ENCODE measurements at regions of chr13 and their contacts with region 1.

Region 1: DNA sequence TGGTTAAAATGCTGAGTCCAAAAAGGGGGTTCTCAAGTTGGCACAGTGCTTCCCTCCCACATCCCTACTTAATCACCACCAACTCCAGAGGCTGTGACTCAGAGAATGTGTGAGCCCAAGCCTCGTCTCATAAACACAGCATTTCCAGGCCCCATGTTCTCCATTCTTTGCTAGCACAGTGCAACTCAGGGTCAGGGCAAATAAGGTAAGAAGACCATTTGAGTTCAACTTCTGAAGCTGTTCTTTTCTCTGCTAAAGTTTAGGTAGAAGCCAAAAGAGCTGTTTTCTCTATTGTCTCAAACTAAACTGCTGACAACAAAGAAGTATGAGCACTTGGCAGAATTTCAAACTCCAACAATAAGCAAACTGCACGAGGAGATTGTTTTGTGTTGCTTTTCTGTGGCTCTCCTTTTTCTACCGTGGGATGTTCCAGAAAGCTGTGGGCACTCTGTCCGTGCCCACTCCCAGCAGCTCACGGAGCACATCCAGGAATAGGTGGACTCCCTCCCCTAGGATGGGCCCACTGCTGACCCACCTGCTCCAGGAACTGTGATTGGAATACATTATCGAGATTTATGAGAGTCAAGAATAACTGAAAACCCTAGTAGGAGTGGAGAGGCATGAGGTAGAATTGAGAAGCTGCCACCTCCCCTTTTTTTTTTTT is 494.3 kb downstream of the COG6 start:
- DNase-seq: no peak
- H3K4me3 Mint-ChIP-seq: no peak overlapping the region
- H3K27ac Mint-ChIP-seq: peak overlapping the region; percentile 40
- H3K4me1 Mint-ChIP-seq: peaks cover 55% of the 10 kb centered on the region
- H3K27me3 Mint-ChIP-seq: no peaks in the 10 kb centered on the region

Region 2: GRCh38 chr13:40069173-40070044 is 80.3 kb before region 1 on chr13:
- intact Hi-C with region 1: loop called (anchors 5 kb)
- DNase-seq: peak; percentile 51
- H3K4me3 Mint-ChIP-seq: no peak overlapping the region
- H3K27ac Mint-ChIP-seq: no peak overlapping the region
- H3K4me1 Mint-ChIP-seq: peaks cover 22% of the 10 kb centered on the region
- H3K27me3 Mint-ChIP-seq: no peaks in the 10 kb centered on the region

Region 3: DNA sequence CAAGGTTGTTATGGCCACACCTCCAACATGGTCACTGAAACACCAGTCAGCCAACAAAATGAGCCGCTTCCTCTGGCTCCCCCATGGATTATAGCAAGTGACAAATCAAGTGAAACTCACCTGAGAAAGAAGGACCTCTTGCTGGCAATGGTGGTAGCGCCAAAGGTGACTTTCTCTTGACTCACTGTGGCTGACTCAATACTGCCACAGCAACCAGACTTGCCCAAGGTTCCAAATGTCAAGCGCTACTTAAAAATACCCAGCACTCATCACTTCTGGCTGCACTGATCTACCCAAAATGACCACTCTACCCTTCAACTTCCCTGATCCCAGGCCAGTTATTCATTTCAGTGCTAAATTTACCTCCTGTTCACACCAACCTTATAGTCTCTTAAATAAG is 21.2 kb after region 1 on chr13:
- intact Hi-C with region 1: loop called (anchors 2 kb)
- DNase-seq: no peak
- H3K4me3 Mint-ChIP-seq: no peak overlapping the region
- H3K27ac Mint-ChIP-seq: no peak overlapping the region
- H3K4me1 Mint-ChIP-seq: peaks cover 14% of the 10 kb centered on the region
- H3K27me3 Mint-ChIP-seq: peaks cover 2% of the 10 kb centered on the region

Region 4: GRCh38 chr13:40190641-40191100 is 40.9 kb after region 1 on chr13:
- intact Hi-C with region 1: no loop called
- DNase-seq: peak; percentile 55
- H3K4me3 Mint-ChIP-seq: peak overlapping the region; percentile 31
- H3K27ac Mint-ChIP-seq: peak overlapping the region; percentile 79
- H3K4me1 Mint-ChIP-seq: peaks cover 59% of the 10 kb centered on the region
- H3K27me3 Mint-ChIP-seq: peaks cover 2% of the 10 kb centered on the region

Region 5: DNA sequence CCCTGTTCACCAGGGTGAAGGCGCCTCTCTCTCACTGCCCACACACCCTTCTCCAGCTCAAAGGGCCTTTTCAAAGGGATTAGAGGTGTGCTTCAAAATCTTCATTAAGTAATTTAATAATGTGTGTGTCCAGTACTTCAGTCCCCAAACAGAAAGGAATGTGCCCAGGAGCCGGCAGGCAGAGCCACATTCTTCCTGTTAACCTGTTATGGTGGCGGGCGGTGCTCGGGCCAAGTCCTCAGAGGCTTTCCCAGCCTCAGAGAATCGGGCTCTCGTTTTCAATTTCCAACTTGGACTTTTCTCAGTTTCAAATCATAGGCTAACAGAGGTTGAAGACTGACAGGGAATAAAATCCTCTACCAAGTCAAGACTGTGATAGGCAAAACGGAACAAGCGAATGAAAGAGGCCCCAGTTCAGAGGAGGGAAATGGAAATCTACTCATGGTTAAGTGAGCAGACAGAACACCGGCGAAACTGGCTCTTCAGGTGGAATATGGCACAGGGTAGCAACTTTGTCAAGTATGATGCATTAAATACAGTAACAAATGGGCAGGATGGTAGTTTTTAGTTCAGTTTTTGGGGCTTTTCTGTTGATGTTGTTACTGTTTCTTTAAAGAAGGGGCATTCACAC is 448.1 kb after region 1 on chr13:
- intact Hi-C with region 1: no loop called
- DNase-seq: no peak
- H3K4me3 Mint-ChIP-seq: peak overlapping the region; percentile 7
- H3K27ac Mint-ChIP-seq: peak overlapping the region; percentile 47
- H3K4me1 Mint-ChIP-seq: peaks cover 67% of the 10 kb centered on the region
- H3K27me3 Mint-ChIP-seq: no peaks in the 10 kb centered on the region